Transverse colon (tissue), 4 donors: ENCODE measurements at regions of chr4 and their contacts with region 1.

Region 1: GRCh38 chr4:99462875-99463464 is 27.8 kb upstream of the ADH7 start:
- DNase-seq: peak; percentile 63
- H3K4me3 ChIP-seq: no peak overlapping the region
- H3K27ac ChIP-seq: no peak overlapping the region
- H3K4me1 ChIP-seq: no peaks in the 10 kb centered on the region
- H3K27me3 ChIP-seq: no peaks in the 10 kb centered on the region
- CTCF ChIP-seq: peak; percentile 73 to 86 (median 81)
- EP300 ChIP-seq: no peak
- POLR2A ChIP-seq: no peak

Region 2: GRCh38 chr4:99117876-99118693 is 344.9 kb before region 1 on chr4:
- in situ Hi-C with region 1: no loop called
- intact Hi-C with region 1: loop called (anchors 10 kb)
- DNase-seq: no peak
- H3K4me3 ChIP-seq: no peak overlapping the region
- H3K27ac ChIP-seq: no peak overlapping the region
- H3K4me1 ChIP-seq: peaks cover 0 to 6% (median 0%) of the 10 kb centered on the region in 4 donors
- H3K27me3 ChIP-seq: no peaks in the 10 kb centered on the region
- CTCF ChIP-seq: peak in 4 of 5 experiments; percentile 33 to 55 (median 36)
- EP300 ChIP-seq: no peak
- POLR2A ChIP-seq: no peak

Region 3: GRCh38 chr4:99847362-99847976 is 384.5 kb after region 1 on chr4:
- in situ Hi-C with region 1: no loop called
- intact Hi-C with region 1: no loop called
- DNase-seq: no peak
- H3K4me3 ChIP-seq: no peak overlapping the region
- H3K27ac ChIP-seq: peak overlapping the region in 1 of 4 donors; percentile 29
- H3K4me1 ChIP-seq: no peaks in the 10 kb centered on the region
- H3K27me3 ChIP-seq: no peaks in the 10 kb centered on the region
- CTCF ChIP-seq: no peak
- EP300 ChIP-seq: no peak
- POLR2A ChIP-seq: no peak